Dorsolateral prefrontal cortex (tissue), 120 donors: ENCODE measurements at regions of chr15 and their contacts with region 1.

Region 1: GRCh38 chr15:51227940-51228783 is 110.2 kb downstream of the CYP19A1 start:
- DNase-seq: no peak
- H3K4me3 ChIP-seq: no peak overlapping the region
- H3K27ac ChIP-seq: no peak overlapping the region
- H3K27me3 ChIP-seq: peaks cover 0 to 2% (median 0%) of the 10 kb centered on the region in 45 donors
- CTCF ChIP-seq: no peak

Region 2: DNA sequence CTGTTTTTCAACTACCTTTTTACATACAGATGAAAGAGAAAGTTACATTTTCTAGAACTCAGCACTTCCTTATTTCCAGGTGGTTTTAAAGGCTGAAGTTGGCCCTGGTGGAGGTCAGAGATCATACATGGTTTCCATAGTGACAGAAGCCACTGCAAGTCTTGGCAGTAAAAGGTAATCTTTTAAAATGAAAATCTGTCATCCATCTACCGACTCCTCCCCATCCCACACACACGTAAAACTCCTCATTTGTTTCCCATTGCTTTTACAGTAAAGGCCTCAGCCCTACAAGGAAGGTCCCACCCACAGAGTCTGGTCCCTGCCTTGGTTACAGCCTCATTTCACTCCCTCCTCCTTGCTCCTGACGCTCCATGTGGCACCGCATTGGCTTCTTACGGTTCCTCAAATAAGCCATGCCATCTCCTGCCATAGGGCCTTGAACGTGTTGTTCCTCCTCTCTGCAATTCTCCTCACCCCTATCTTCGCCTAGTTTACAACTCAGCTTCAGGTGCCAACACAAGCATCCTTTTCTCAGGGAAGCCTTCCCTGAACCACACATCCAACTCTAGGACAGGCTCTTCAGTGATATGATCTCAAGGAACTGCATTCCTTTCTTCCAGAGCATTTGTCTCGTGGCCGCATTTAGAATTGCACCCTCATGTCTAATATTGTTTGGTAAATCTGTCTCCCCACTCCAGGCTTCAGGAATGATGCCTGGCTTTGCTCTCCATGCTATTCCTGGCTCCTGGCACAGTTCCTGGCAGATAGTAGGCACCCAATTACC is 107.6 kb after region 1 on chr15:
- intact Hi-C with region 1: loop called in 1 of 2 experiments (anchors 5 kb)
- DNase-seq: peak in 1 of 10 donors; percentile 48
- H3K4me3 ChIP-seq: no peak overlapping the region
- H3K27ac ChIP-seq: peak overlapping the region in 30 of 59 donors; percentile 2 to 71 (median 40)
- H3K27me3 ChIP-seq: no peaks in the 10 kb centered on the region
- CTCF ChIP-seq: no peak

Region 3: DNA sequence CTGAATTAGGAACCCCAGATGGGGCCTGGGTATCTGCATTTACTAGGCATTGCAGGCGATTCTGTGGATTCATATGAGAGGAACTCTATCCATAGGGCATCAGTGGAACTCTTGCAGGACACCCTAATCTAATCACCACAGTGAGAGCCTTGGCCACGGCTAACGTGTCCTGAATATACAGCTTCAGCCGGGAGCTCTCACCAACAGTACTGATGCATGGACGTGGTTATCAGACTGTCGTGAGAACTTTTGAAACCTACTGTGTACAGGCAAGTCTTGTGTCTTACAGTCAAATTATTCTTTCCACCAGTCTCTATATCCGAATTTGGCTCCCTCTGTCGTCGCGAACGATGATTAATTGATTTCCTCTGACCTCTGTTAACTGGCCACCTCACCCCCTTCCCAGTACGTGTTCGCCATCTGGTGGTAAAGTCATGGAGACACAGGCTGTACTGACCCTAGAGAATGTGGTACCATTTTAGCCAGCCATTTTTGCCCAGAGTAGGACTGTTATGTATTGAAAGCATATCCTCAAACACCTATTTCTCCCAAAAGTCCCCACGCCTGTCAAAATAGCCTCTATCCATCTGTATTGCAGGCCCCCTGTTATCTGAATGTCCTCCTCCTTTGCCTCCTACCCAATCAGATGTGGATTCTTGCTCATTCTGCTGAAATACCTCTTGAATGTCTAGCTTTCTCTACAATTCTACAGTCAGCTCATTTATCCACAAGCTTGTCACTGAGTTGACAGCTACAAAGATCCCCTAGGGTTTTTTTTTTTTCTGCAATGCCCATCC is 153.0 kb after region 1 on chr15:
- intact Hi-C with region 1: loop called (anchors 1 to 5 kb)
- DNase-seq: peak; percentile 33 to 78 (median 61)
- H3K4me3 ChIP-seq: peak overlapping the region in 6 of 59 donors; percentile 13 to 34 (median 20)
- H3K27ac ChIP-seq: peak overlapping the region in 51 of 59 donors; percentile 4 to 97 (median 84)
- H3K27me3 ChIP-seq: no peaks in the 10 kb centered on the region
- CTCF ChIP-seq: peak; percentile 51 to 99 (median 93)

Region 4: DNA sequence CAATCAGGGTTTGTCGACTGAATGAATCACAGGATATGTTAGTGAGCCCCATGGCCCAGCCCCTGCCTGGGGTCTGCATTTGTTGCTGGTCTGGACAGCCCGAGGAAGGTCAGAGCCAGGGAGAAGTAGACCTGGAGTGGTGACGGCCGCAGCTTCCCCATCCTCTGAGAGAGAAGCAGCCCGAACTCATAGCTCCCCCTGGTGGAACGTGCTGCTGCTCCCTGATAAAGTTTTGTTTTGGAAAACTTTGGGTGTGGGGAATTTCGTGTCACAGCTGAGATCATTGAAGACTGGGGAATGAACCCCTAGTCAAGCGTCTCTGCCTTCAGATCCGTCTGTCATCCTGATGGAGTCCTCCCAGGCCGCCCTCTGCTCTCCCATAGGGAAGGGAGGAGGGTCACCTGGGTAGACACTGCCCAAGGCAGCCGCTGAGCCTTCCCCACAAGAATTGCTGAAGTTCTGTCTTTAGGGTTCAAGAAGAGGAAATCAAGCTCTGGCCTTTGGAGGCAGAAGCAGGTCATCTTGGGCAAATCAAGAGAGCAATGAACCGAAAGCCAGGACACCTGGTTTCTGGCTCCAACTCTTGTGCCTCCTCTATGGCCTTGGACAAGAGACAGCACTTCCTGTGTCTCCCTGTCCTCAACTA is 173.8 kb after region 1 on chr15:
- intact Hi-C with region 1: loop called (anchors 2 to 5 kb)
- DNase-seq: peak in 7 of 10 donors; percentile 23 to 69 (median 51)
- H3K4me3 ChIP-seq: no peak overlapping the region
- H3K27ac ChIP-seq: peak overlapping the region in 2 of 59 donors; percentile 3 to 8
- H3K27me3 ChIP-seq: no peaks in the 10 kb centered on the region
- CTCF ChIP-seq: peak; percentile 44 to 77 (median 64)